Transverse colon (tissue), 4 donors: ENCODE measurements at regions of chr9 and their contacts with region 1.

Region 1: DNA sequence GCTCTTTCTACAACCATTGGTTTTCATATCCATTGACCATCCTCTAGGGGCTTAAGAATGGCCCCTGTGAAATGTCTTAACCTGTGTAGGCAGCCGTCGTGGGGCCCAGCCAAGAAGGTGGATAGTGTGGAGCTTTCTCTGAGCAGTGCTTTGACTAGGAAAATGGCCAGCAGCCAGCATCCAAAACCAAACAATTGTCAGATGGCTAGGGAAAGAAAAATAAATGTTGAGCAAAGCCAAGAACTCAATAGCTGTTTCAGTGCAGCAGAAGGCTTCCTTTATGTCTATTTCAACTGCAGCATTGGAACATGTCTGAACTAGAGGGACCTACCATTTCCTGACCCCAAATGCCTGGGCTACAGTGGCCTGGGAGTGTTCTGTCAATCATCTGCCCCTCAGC is 374.9 kb downstream of the TLE4 start:
- DNase-seq: no peak
- H3K4me3 ChIP-seq: no peak overlapping the region
- H3K27ac ChIP-seq: no peak overlapping the region
- H3K4me1 ChIP-seq: peaks cover 0 to 4% (median 0%) of the 10 kb centered on the region in 4 donors
- H3K27me3 ChIP-seq: no peaks in the 10 kb centered on the region
- CTCF ChIP-seq: no peak
- EP300 ChIP-seq: no peak
- POLR2A ChIP-seq: no peak

Region 2: GRCh38 chr9:79492092-79492995 is 454.4 kb before region 1 on chr9:
- in situ Hi-C with region 1: no loop called
- intact Hi-C with region 1: no loop called
- DNase-seq: no peak
- H3K4me3 ChIP-seq: no peak overlapping the region
- H3K27ac ChIP-seq: no peak overlapping the region
- H3K4me1 ChIP-seq: peaks cover 0 to 13% (median 4%) of the 10 kb centered on the region in 4 donors
- H3K27me3 ChIP-seq: no peaks in the 10 kb centered on the region
- CTCF ChIP-seq: no peak
- EP300 ChIP-seq: no peak
- POLR2A ChIP-seq: no peak

Region 3: GRCh38 chr9:79757881-79758669 is 188.6 kb before region 1 on chr9:
- in situ Hi-C with region 1: loop called in 1 of 4 experiments (anchors 25 kb)
- intact Hi-C with region 1: no loop called
- DNase-seq: no peak
- H3K4me3 ChIP-seq: no peak overlapping the region
- H3K27ac ChIP-seq: peak overlapping the region in 1 of 4 donors; percentile 7
- H3K4me1 ChIP-seq: no peaks in the 10 kb centered on the region
- H3K27me3 ChIP-seq: no peaks in the 10 kb centered on the region
- CTCF ChIP-seq: peak in 3 of 5 experiments; percentile 21 to 34 (median 33)
- EP300 ChIP-seq: no peak
- POLR2A ChIP-seq: no peak

Region 4: DNA sequence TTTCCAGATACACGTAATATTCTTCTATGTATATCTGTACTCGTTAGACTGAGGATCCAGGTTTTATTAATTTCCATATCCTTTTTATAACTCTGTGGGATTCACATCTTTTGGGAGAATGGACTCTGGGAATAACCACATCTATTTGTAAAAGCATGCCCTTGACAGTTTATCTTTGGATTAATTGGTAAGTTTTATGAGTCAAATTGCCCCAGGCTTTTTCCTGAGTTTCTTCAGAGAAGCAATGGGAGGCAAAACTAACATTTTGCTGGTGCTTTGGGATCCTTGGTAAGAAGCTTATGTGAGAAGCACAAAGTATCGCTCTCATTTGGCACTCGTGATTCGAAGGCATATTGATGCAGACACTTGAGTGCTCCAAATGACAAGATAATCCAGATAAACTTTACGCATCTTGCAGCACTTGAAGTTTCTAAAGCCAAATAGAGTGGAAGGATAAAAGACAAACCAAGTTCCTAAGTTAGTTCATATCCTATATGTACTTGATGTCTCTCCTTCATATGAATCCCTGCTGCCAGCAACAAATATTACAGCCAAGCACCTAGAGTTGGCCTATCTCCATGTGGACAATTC is 50.2 kb before region 1 on chr9:
- in situ Hi-C with region 1: no loop called
- intact Hi-C with region 1: no loop called
- DNase-seq: no peak
- H3K4me3 ChIP-seq: no peak overlapping the region
- H3K27ac ChIP-seq: no peak overlapping the region
- H3K4me1 ChIP-seq: no peaks in the 10 kb centered on the region
- H3K27me3 ChIP-seq: no peaks in the 10 kb centered on the region
- CTCF ChIP-seq: no peak
- EP300 ChIP-seq: no peak
- POLR2A ChIP-seq: no peak

Region 5: GRCh38 chr9:80028501-80028900 is 81.8 kb after region 1 on chr9:
- in situ Hi-C with region 1: loop called in 1 of 4 experiments (anchors 25 kb)
- intact Hi-C with region 1: no loop called
- DNase-seq: no peak
- H3K4me3 ChIP-seq: no peak overlapping the region
- H3K27ac ChIP-seq: no peak overlapping the region
- H3K4me1 ChIP-seq: peaks cover 0 to 2% (median 0%) of the 10 kb centered on the region in 4 donors
- H3K27me3 ChIP-seq: no peaks in the 10 kb centered on the region
- CTCF ChIP-seq: no peak
- EP300 ChIP-seq: no peak
- POLR2A ChIP-seq: no peak